CD4-positive, alpha-beta T cell (primary cell): ENCODE measurements at regions of chr1 and their contacts with region 1.

Region 1: GRCh38 chr1:116273042-116273783 is 99.8 kb upstream of the ATP1A1 start:
- DNase-seq: no peak
- ATAC-seq: no peak
- H3K4me3 ChIP-seq: no peak overlapping the region
- H3K4me3 Mint-ChIP-seq: no peak overlapping the region
- H3K27ac ChIP-seq: no peak overlapping the region
- H3K27ac Mint-ChIP-seq: no peak overlapping the region
- H3K4me1 ChIP-seq: peaks cover 2% of the 10 kb centered on the region
- H3K4me1 Mint-ChIP-seq: peaks cover 9% of the 10 kb centered on the region
- H3K27me3 ChIP-seq: no peaks in the 10 kb centered on the region
- H3K27me3 Mint-ChIP-seq: no peaks in the 10 kb centered on the region
- CTCF ChIP-seq: no peak

Region 2: GRCh38 chr1:116309089-116309870 is 36.1 kb after region 1 on chr1:
- CTCF ChIA-PET with region 1: no interaction called
- POLR2A ChIA-PET with region 1: no interaction called
- intact Hi-C with region 1: loop called in 1 of 2 experiments (anchors 5 kb)
- DNase-seq: no peak
- ATAC-seq: no peak
- H3K4me3 ChIP-seq: no peak overlapping the region
- H3K4me3 Mint-ChIP-seq: no peak overlapping the region
- H3K27ac ChIP-seq: no peak overlapping the region
- H3K27ac Mint-ChIP-seq: no peak overlapping the region
- H3K4me1 ChIP-seq: peaks cover 11% of the 10 kb centered on the region
- H3K4me1 Mint-ChIP-seq: peaks cover 40% of the 10 kb centered on the region
- H3K27me3 ChIP-seq: no peaks in the 10 kb centered on the region
- H3K27me3 Mint-ChIP-seq: no peaks in the 10 kb centered on the region
- CTCF ChIP-seq: no peak